SK-N-SH (cell line): ENCODE measurements at regions of chr7 and their contacts with region 1.

Region 1: GRCh38 chr7:107462740-107463444 is 7.0 kb upstream of the GPR22 start:
- DNase-seq: peak; percentile 60
- H3K4me3 ChIP-seq: no peak overlapping the region; a peak in 1 of 4 replicates
- H3K27ac ChIP-seq: peak overlapping the region in 1 of 2 experiments; percentile 23; a peak in 1 of 4 replicates
- H3K4me1 ChIP-seq: peaks cover 0 to 13% of the 10 kb centered on the region in 2 experiments; a peak in 2 of 4 replicates
- H3K27me3 ChIP-seq: no peaks in the 10 kb centered on the region
- CTCF ChIP-seq: peak; percentile 96
- EP300 ChIP-seq: no peak
- RAD21 ChIP-seq: peak; percentile 100

Region 2: GRCh38 chr7:107355616-107356015 is 107.3 kb before region 1 on chr7:
- CTCF ChIA-PET with region 1: no interaction called
- POLR2A ChIA-PET with region 1: no interaction called
- DNase-seq: no peak
- H3K4me3 ChIP-seq: no peak overlapping the region
- H3K27ac ChIP-seq: 0 out of 4 replicates have a peak overlapping the region, but pooled peaks of 1 of the 2 experiments have one; percentile 1
- H3K4me1 ChIP-seq: peaks cover 0 to 3% of the 10 kb centered on the region in 2 experiments; a peak in 2 of 4 replicates
- H3K27me3 ChIP-seq: no peaks in the 10 kb centered on the region
- CTCF ChIP-seq: no peak
- EP300 ChIP-seq: no peak
- RAD21 ChIP-seq: no peak

Region 3: DNA sequence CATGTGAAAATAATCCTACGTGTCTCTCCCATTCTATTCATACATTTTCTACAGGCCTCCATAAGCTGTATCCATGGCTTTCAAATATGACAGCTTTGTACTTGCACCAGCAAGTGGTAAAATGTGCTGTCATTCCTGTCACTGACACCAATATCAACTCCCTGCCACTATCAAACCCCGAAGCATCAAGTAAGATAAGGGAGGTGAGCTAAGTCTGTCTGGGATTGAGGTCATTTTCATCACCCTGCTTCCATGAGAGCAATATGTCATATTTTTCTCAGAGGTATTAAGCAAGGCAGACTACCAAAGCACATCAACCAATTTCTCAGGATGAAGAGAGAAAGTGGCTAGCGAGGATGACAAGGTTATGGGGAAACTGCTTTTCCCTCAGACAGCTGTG is 18.0 kb after region 1 on chr7:
- CTCF ChIA-PET with region 1: interaction called, 39 read pairs
- POLR2A ChIA-PET with region 1: no interaction called
- DNase-seq: no peak
- H3K4me3 ChIP-seq: no peak overlapping the region
- H3K27ac ChIP-seq: no peak overlapping the region; a peak in 1 of 4 replicates
- H3K4me1 ChIP-seq: peaks cover 0 to 6% of the 10 kb centered on the region in 2 experiments; a peak in 2 of 4 replicates
- H3K27me3 ChIP-seq: no peaks in the 10 kb centered on the region
- CTCF ChIP-seq: no peak
- EP300 ChIP-seq: no peak
- RAD21 ChIP-seq: no peak

Region 4: DNA sequence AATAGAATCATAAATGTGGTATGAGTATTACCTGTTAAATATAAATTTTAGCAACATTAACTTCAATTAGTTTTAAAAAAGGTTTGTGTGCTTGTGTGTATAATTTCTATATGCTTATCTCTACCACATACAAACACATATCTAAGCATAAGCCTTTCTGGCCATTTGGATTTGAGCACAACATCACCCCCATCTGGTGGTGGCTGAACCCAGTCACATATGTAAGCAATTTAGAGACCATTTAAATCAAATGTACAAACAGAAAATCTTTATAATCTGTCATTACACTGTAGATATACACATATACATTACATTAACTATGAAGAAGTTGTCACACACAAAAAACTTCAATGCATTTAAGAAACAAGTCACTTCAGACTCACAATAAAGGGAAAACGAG is 38.7 kb after region 1 on chr7:
- CTCF ChIA-PET with region 1: interaction called, 21 read pairs
- POLR2A ChIA-PET with region 1: no interaction called
- DNase-seq: peak; percentile 56
- H3K4me3 ChIP-seq: no peak overlapping the region
- H3K27ac ChIP-seq: no peak overlapping the region
- H3K4me1 ChIP-seq: peaks cover 0 to 2% of the 10 kb centered on the region in 2 experiments; a peak in 2 of 4 replicates
- H3K27me3 ChIP-seq: no peaks in the 10 kb centered on the region
- CTCF ChIP-seq: peak; percentile 70
- EP300 ChIP-seq: no peak
- RAD21 ChIP-seq: peak; percentile 83

Region 5: GRCh38 chr7:107711301-107711700 is 248.4 kb after region 1 on chr7:
- CTCF ChIA-PET with region 1: interaction called, 12 read pairs
- POLR2A ChIA-PET with region 1: no interaction called
- DNase-seq: no peak
- H3K4me3 ChIP-seq: no peak overlapping the region
- H3K27ac ChIP-seq: no peak overlapping the region
- H3K4me1 ChIP-seq: no peaks in the 10 kb centered on the region
- H3K27me3 ChIP-seq: no peaks in the 10 kb centered on the region
- CTCF ChIP-seq: no peak
- EP300 ChIP-seq: no peak
- RAD21 ChIP-seq: no peak

Region 6: DNA sequence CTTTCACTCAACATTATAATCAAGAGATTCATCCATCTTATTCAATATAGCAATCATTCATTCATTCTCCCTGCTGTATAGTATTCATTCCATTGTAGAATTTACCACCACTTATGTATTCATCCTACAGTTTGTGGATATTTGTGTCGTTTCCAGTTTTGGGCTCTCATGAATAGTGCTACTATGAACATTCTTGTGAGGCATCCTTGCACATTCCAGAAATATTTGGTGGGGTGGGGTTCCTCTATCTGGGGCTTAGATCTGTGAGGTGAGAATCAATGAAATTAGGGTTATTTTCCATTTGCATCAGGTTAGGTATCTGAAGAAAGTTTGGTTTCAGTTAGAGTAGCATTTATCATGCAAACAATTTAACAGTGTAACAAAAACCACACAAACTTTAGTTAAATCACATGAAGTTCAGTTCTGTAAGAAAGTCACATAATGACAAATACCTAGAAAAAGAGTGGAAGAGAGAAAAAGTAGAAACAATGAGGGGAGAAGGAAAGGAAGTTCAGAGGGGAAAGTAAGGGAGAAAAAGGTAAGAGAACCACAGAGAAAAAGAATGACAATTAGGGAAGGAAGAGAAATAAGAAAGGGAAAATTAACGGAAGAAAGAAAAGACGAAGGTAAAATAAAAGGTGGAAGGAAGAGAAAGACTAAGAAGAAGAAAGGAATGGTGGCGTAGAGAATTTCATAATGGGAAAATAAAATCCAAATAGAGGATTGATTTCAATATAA is 255.7 kb after region 1 on chr7:
- CTCF ChIA-PET with region 1: interaction called, 92 read pairs
- POLR2A ChIA-PET with region 1: no interaction called
- DNase-seq: no peak
- H3K4me3 ChIP-seq: no peak overlapping the region
- H3K27ac ChIP-seq: no peak overlapping the region
- H3K4me1 ChIP-seq: no peaks in the 10 kb centered on the region
- H3K27me3 ChIP-seq: no peaks in the 10 kb centered on the region
- CTCF ChIP-seq: no peak
- EP300 ChIP-seq: no peak
- RAD21 ChIP-seq: no peak

Region 7: DNA sequence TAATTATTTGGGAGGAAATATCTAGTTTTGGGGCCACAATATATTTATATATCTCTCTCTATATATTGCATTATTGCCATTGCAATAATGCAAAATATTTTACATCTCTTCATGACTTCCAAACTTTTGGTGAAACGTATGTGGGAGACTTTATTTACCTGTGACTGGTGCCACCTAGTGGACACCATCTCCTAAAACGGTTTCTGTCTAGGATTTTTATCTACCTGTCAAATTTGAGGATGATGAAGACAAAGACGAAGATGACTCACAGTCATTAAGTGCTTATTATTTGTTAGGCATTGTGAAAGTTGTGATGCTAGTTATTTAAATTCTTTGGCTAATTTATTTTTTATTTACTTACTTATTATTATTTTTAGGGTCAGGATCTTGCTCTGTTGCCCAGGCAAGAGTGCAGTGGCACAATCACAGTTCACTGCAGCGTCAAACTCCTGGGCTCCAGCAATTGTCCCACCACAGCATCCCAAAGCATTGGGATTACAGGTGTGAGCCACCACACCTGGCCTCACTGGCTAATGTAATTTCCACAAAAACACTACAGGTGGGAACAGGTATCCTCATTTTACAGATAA is 262.4 kb after region 1 on chr7:
- CTCF ChIA-PET with region 1: interaction called, 92 read pairs
- POLR2A ChIA-PET with region 1: no interaction called
- DNase-seq: peak; percentile 71
- H3K4me3 ChIP-seq: no peak overlapping the region
- H3K27ac ChIP-seq: no peak overlapping the region
- H3K4me1 ChIP-seq: no peaks in the 10 kb centered on the region
- H3K27me3 ChIP-seq: no peaks in the 10 kb centered on the region
- CTCF ChIP-seq: peak; percentile 97
- EP300 ChIP-seq: no peak
- RAD21 ChIP-seq: peak; percentile 94

Region 8: DNA sequence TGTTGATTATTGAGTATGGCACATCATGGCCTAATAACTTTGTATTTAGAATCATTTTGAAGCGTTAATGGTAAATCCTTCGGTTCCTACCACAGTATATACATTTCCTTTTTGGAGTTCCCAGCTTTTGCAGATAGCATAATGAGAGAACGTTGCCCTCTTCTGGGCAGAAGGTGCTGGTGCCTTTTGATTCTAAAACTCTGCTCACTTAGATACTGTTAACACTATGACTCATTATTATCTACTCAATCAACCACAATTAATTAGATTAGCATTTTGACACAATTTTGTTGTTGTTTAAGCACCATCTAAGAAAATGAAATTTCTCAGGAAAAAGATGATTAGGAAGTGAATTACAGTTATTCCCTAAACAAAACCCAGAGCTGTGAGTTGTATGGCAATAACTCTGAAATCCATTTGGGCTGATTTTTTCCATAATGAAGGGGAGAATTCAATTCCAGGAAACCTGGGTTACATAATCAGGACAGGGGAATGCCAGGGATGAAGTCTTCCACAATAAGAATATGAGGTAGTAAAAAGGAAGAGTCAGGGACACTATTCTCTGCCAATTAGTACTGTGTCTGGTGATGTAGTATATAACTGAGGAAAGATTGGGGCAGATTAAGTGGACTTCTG is 416.6 kb after region 1 on chr7:
- CTCF ChIA-PET with region 1: interaction called, 33 read pairs
- POLR2A ChIA-PET with region 1: no interaction called
- DNase-seq: peak; percentile 75
- H3K4me3 ChIP-seq: no peak overlapping the region; a peak in 1 of 4 replicates
- H3K27ac ChIP-seq: no peak overlapping the region
- H3K4me1 ChIP-seq: peaks cover 0 to 2% of the 10 kb centered on the region in 2 experiments; a peak in 1 of 4 replicates
- H3K27me3 ChIP-seq: no peaks in the 10 kb centered on the region
- CTCF ChIP-seq: peak; percentile 98
- EP300 ChIP-seq: no peak
- RAD21 ChIP-seq: peak; percentile 90